ENCODE measurements at regions of chr2 and their contacts with region 1.

Region 1: GRCh38 chr2:70248181-70248847 is at the start of gene TIA1:
- DNase-seq: peak; percentile 95
- H3K4me3 ChIP-seq: peak within 1 kb of the TSS; percentile 64 to 96 (median 88)
- H3K27ac ChIP-seq: peak within 1 kb of the TSS; percentile 87
- H3K4me1 ChIP-seq: no peaks in the 10 kb centered on the region
- H3K27me3 ChIP-seq: no peaks in the 10 kb centered on the region
- CTCF ChIP-seq: no peak
- total RNA-seq, gene TIA1: 53.0 to 61.6 TPM

Region 2: GRCh38 chr2:69817729-69818501 is 430.4 kb before region 1 on chr2:
- CTCF ChIA-PET with region 1: no interaction called
- dilution Hi-C with region 1: no loop called
- in situ Hi-C with region 1: no loop called
- intact Hi-C with region 1: no loop called
- DNase-seq: no peak
- H3K4me3 ChIP-seq: no peak overlapping the region
- H3K27ac ChIP-seq: no peak overlapping the region
- H3K4me1 ChIP-seq: no peaks in the 10 kb centered on the region
- H3K27me3 ChIP-seq: no peaks in the 10 kb centered on the region
- CTCF ChIP-seq: no peak

Region 3: DNA sequence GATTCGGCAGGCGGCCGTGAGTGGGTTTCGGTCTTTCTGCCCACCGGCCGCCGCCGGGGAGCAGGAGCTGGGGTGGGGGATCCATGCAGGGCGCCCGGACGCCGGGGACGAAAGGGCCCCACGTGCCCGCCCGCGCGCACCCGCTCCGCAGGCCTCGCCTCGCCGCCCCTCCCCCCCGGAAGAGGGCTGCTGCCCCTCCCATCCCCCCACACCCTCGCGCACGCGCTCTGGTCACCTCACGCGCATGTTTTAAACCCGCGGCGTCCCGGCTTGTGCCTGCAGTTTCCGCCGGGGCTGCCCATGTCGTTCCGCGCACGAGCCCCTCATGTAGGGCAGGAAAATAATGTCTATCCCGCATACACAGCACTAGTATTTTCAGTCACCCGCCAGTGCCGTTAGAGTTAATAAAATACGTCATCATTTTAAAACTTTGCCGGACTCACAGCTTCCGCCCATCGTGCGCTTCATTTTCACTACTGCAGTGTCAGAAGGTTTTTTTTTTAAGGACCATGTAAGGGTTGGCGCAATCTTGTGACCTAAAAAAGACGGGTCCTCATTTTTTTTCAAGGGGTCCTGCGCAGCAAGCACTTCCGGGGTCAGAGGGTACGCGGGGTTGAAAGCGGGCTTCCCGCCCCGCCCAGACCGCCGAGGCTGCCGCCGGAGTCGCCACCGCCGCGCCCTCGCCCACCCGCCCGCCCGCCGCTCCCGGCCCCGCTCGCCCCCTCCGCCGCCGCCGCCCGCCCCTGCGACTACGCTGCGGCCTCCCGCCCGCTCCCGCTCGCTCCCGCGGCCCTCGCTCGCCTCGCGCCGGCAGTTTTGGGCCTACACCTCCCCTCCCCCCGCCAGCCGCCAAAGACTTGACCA is 161.2 kb before region 1 on chr2 and contains the start of gene PCBP1:
- CTCF ChIA-PET with region 1: no interaction called
- dilution Hi-C with region 1: no loop called
- in situ Hi-C with region 1: no loop called
- intact Hi-C with region 1: loop called (anchors 1 kb)
- DNase-seq: peak; percentile 86
- H3K4me3 ChIP-seq: peak within 1 kb of the TSS; percentile 85 to 96 (median 86)
- H3K27ac ChIP-seq: peak within 1 kb of the TSS; percentile 99
- H3K4me1 ChIP-seq: peaks cover 36% of the 10 kb centered on the region
- H3K27me3 ChIP-seq: no peaks in the 10 kb centered on the region
- CTCF ChIP-seq: no peak
- total RNA-seq, gene PCBP1: 47.2 to 258 TPM

Region 4: GRCh38 chr2:70190418-70191243 is 57.7 kb before region 1 on chr2 and contains the start of gene C2orf42:
- CTCF ChIA-PET with region 1: no interaction called
- dilution Hi-C with region 1: no loop called
- in situ Hi-C with region 1: no loop called
- intact Hi-C with region 1: loop called (anchors 1 kb)
- DNase-seq: peak; percentile 97
- H3K4me3 ChIP-seq: peak within 1 kb of the TSS; percentile 77 to 84 (median 79)
- H3K27ac ChIP-seq: peak within 1 kb of the TSS; percentile 91
- H3K4me1 ChIP-seq: peaks cover 4% of the 10 kb centered on the region
- H3K27me3 ChIP-seq: no peaks in the 10 kb centered on the region
- CTCF ChIP-seq: no peak
- total RNA-seq, gene C2orf42: 17.3 to 20.2 TPM

Region 5: GRCh38 chr2:70258532-70258874 is 10.2 kb after region 1 on chr2:
- CTCF ChIA-PET with region 1: no interaction called
- dilution Hi-C with region 1: no loop called
- in situ Hi-C with region 1: no loop called
- intact Hi-C with region 1: loop called (anchors 1 kb)
- DNase-seq: peak; percentile 41
- H3K4me3 ChIP-seq: peak overlapping the region; percentile 46 to 93 (median 75)
- H3K27ac ChIP-seq: peak overlapping the region; percentile 9
- H3K4me1 ChIP-seq: peaks cover 9% of the 10 kb centered on the region
- H3K27me3 ChIP-seq: no peaks in the 10 kb centered on the region
- CTCF ChIP-seq: no peak